ENCODE measurements at regions of chr11 and their contacts with region 1.

Region 1: GRCh38 chr11:43282607-43283440 is 29.0 kb upstream of the API5 start:
- DNase-seq: peak; percentile 56
- H3K4me3 ChIP-seq: peak overlapping the region in 1 of 2 experiments; percentile 38; a peak in 1 of 4 replicates
- H3K27ac ChIP-seq: no peak overlapping the region
- H3K4me1 ChIP-seq: peaks cover 4 to 16% of the 10 kb centered on the region in 2 experiments; a peak in 2 of 4 replicates
- H3K27me3 ChIP-seq: no peaks in the 10 kb centered on the region
- CTCF ChIP-seq: peak; percentile 98
- EP300 ChIP-seq: no peak
- RAD21 ChIP-seq: peak; percentile 84

Region 2: DNA sequence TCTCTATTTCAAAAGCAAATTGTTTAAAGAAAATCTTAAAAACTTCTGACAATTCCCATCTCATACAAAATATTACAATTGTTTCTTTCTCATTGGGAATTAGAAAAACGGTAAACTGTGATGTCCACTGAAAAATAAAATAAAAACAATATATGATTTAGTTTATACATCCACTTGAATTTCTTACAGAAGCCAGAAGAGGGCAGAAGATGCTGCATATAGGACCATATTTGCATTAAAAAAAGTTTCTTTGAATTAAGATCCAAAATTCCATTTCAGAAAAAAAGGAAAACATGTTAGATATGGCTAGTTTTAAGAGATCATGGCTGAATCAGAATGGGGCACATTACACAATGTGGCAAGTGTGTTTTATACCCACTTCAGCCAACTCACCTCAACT is 1784.1 kb before region 1 on chr11:
- CTCF ChIA-PET with region 1: interaction called, 15 read pairs
- POLR2A ChIA-PET with region 1: no interaction called
- DNase-seq: peak; percentile 5
- H3K4me3 ChIP-seq: no peak overlapping the region; a peak in 1 of 4 replicates
- H3K27ac ChIP-seq: no peak overlapping the region
- H3K4me1 ChIP-seq: peaks cover 0 to 10% of the 10 kb centered on the region in 2 experiments; a peak in 2 of 4 replicates
- H3K27me3 ChIP-seq: no peaks in the 10 kb centered on the region
- CTCF ChIP-seq: peak; percentile 54
- EP300 ChIP-seq: no peak
- RAD21 ChIP-seq: peak; percentile 70

Region 3: DNA sequence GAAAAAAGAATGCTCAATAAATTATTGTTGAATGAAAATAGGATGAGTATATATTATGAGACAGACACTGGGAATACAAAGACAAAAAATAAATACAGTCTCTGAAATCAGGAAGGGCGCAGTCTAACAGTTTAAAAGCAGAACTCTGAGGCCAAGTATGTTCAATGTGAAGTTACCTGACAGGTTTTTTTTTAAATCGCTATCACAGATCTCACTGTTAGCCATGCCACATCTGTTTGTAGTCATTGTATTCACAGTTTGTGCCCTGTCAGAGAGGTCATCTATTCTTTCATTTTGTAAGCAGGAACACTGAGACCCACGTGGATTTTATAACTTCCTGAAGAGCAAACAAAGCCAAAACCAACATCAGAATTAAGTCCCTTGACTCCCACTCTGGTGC is 516.0 kb before region 1 on chr11:
- CTCF ChIA-PET with region 1: interaction called, 11 read pairs
- POLR2A ChIA-PET with region 1: no interaction called
- DNase-seq: no peak
- H3K4me3 ChIP-seq: no peak overlapping the region
- H3K27ac ChIP-seq: no peak overlapping the region
- H3K4me1 ChIP-seq: peaks cover 0 to 3% of the 10 kb centered on the region in 2 experiments; a peak in 2 of 4 replicates
- H3K27me3 ChIP-seq: no peaks in the 10 kb centered on the region
- CTCF ChIP-seq: no peak
- EP300 ChIP-seq: no peak
- RAD21 ChIP-seq: no peak

Region 4: GRCh38 chr11:43269254-43269918 is 13.4 kb before region 1 on chr11:
- CTCF ChIA-PET with region 1: interaction called, 28 read pairs
- POLR2A ChIA-PET with region 1: no interaction called
- DNase-seq: peak; percentile 50
- H3K4me3 ChIP-seq: no peak overlapping the region
- H3K27ac ChIP-seq: peak overlapping the region in 1 of 2 experiments; percentile 71; a peak in 2 of 4 replicates
- H3K4me1 ChIP-seq: peaks cover 0 to 21% of the 10 kb centered on the region in 2 experiments; a peak in 2 of 4 replicates
- H3K27me3 ChIP-seq: no peaks in the 10 kb centered on the region
- CTCF ChIP-seq: no peak
- EP300 ChIP-seq: no peak
- RAD21 ChIP-seq: no peak

Region 5: DNA sequence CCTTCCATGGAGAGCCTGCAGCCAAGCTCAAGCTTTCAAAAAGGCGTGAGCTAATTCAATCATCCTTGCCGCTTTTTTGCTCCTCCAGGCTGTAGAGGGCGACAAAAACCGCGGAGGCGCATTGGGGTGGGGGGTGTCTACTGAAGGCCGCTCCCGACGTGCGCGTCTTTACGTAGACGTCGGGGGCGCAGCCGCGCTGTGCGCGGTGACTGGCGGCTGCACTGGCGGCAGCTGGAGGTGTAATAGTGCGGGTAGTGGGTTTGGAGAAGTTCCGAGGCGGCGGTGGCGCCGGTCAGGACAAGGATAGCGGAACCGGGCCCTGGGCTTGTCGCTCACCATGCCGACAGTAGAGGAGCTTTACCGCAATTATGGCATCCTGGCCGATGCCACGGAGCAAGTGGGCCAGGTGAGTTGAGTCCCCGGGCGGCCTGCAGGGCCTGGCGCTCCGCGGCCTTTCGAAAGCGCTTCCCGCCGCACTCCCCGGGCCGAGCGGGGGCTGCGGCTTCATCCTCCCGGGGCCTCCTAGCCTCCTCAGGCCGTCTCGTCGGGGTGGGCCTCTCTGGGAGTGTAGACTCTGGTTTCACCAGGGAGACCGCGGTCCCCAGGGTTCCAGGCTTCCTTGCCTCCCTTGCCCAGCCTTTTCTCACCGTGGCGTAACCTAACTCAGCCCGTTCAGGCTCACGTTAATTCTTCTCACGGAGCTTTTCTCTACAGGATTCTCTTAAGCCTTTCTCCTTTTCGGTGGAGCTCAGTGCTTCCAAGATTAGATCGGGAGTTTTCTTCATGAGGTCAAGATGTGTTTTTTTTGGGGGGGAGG is 29.2 kb after region 1 on chr11 and contains the start of gene API5:
- CTCF ChIA-PET with region 1: interaction called, 10 read pairs
- POLR2A ChIA-PET with region 1: no interaction called
- DNase-seq: peak; percentile 91
- H3K4me3 ChIP-seq: peak within 1 kb of the TSS; percentile 82 to 97
- H3K27ac ChIP-seq: peak within 1 kb of the TSS; percentile 81 to 83
- H3K4me1 ChIP-seq: peaks cover 9 to 17% of the 10 kb centered on the region in 2 experiments; a peak in 3 of 4 replicates
- H3K27me3 ChIP-seq: no peaks in the 10 kb centered on the region
- CTCF ChIP-seq: peak; percentile 78
- EP300 ChIP-seq: peak in 1 of 2 experiments; percentile 46; a peak in 2 of 4 replicates
- RAD21 ChIP-seq: no peak; the same call in 1 of the 2 replicates
- polyA plus RNA-seq, gene API5: 60.1 and 80.9 TPM in 2 replicates

Measured in SK-N-SH (cell line).